ENCODE measurements at regions of chr17 and their contacts with region 1.

Region 1: GRCh38 chr17:82871056-82871903 is 31.5 kb upstream of the ZNF750 start:
- DNase-seq: peak; percentile 21
- H3K4me3 ChIP-seq: no peak overlapping the region
- H3K27ac ChIP-seq: no peak overlapping the region
- H3K4me1 ChIP-seq: peaks cover 23% of the 10 kb centered on the region
- H3K27me3 ChIP-seq: no peaks in the 10 kb centered on the region
- CTCF ChIP-seq: peak in 1 of 2 donors; percentile 7

Region 2: DNA sequence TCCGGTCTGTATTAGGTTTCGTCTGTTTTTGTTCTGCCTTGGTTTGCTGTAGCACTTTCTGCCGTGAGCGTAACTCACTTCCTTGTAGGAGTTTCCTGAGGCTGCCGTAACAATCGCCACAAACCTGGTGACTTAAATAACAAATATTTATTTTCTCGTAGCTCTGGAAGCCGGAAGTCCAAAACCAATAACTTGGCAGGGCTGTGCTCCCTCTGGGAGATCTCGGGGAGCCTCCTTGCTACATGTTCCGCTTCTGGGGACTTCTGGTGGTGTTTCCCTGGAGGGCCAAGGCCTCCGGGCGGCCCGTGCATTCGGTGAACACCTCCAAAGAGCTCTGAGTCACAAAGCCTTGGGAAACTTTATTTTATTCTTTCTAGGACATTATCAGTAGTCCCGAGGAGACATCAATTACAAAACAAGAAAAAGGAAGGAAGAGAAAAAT is 216.2 kb before region 1 on chr17:
- CTCF ChIA-PET with region 1: no interaction called
- dilution Hi-C with region 1: no loop called
- in situ Hi-C with region 1: no loop called
- intact Hi-C with region 1: no loop called
- DNase-seq: no peak
- H3K4me3 ChIP-seq: no peak overlapping the region
- H3K27ac ChIP-seq: no peak overlapping the region
- H3K4me1 ChIP-seq: no peaks in the 10 kb centered on the region
- H3K27me3 ChIP-seq: no peaks in the 10 kb centered on the region
- CTCF ChIP-seq: no peak

Region 3: GRCh38 chr17:82668631-82669099 is 202.6 kb before region 1 on chr17:
- CTCF ChIA-PET with region 1: no interaction called
- dilution Hi-C with region 1: no loop called
- in situ Hi-C with region 1: no loop called
- intact Hi-C with region 1: no loop called
- DNase-seq: peak; percentile 37
- H3K4me3 ChIP-seq: no peak overlapping the region
- H3K27ac ChIP-seq: no peak overlapping the region
- H3K4me1 ChIP-seq: no peaks in the 10 kb centered on the region
- H3K27me3 ChIP-seq: no peaks in the 10 kb centered on the region
- CTCF ChIP-seq: peak; percentile 46 to 74

Region 4: GRCh38 chr17:82781894-82782274 is 89.4 kb before region 1 on chr17:
- CTCF ChIA-PET with region 1: no interaction called
- dilution Hi-C with region 1: no loop called
- in situ Hi-C with region 1: loop called (anchors 5 kb)
- intact Hi-C with region 1: loop called (anchors 1 kb)
- DNase-seq: peak; percentile 62
- H3K4me3 ChIP-seq: no peak overlapping the region
- H3K27ac ChIP-seq: no peak overlapping the region
- H3K4me1 ChIP-seq: peaks cover 6% of the 10 kb centered on the region
- H3K27me3 ChIP-seq: no peaks in the 10 kb centered on the region
- CTCF ChIP-seq: peak; percentile 91 to 100

Region 5: DNA sequence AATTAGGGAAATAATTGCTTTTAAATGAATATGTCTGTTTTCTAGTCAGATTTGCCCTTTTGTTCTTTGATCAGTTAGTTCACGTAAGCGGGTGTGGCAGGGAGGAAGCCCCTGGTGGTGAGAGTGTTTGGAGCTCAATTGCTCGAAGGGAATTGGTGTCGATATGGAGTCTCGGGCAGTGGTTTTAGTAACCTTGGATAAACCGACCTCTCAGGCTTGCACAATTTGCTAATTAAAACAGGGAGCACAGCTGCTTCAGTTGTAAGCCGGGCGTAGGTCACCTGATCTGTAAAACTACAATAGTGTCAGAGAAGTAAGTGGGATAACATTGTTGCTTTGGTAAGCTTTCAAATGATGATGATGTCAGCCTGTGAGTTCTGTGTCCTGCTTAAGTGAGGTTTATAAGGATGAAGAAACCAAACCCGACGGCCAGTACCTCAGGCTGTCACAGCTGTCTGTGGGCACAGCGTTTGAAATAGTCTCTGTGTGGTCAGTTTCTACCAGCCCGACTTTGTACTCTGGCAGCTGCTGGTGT is 34.4 kb before region 1 on chr17:
- CTCF ChIA-PET with region 1: no interaction called
- dilution Hi-C with region 1: loop called (anchors 5 kb)
- in situ Hi-C with region 1: loop called (anchors 5 kb)
- intact Hi-C with region 1: loop called (anchors 1 kb)
- DNase-seq: no peak
- H3K4me3 ChIP-seq: no peak overlapping the region
- H3K27ac ChIP-seq: peak overlapping the region; percentile 100
- H3K4me1 ChIP-seq: peaks cover 38% of the 10 kb centered on the region
- H3K27me3 ChIP-seq: no peaks in the 10 kb centered on the region
- CTCF ChIP-seq: peak; percentile 2 to 14